MCF 10A (cell line): ENCODE measurements at regions of chr16 and their contacts with region 1.

Region 1: DNA sequence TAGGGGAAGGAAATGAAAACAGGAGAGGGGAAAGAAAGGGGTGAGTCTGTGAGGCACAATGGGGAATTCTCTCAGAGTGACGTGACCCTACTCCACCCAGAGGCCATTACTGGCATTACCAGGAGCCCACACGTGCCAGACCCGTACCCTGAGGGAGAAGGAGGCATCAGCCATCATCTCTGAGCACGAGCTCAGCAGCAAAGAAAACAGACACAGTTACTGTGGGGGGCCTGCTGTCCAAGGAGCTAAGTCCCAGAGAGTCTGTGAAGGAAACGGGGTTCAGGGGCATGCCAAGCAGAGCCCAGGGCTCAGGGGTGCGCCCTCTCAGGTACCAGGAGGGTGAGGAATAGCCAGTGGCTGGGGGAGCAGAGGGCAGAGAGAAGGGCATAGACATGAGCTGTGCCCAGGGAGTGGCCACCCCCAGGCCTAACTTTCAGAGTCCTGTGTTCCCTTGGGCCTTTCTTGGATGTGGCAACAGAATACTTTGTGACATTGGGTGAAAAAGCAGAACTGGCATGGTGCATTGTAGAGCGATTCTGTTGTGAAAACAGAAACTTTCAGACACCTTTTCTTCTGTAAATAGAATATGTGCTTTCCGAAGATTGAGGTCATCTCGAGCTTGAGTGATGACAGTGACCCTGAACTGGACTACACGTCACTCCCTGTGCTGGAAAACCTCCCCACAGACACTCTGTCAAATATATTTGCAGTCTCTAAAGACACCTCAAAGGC is 11.3 kb downstream of the TAF1C start:
- DNase-seq: peak; percentile 67
- H3K4me3 Mint-ChIP-seq: no peak overlapping the region
- H3K27ac Mint-ChIP-seq: peak overlapping the region; percentile 41
- H3K4me1 Mint-ChIP-seq: peaks cover 6% of the 10 kb centered on the region
- H3K27me3 Mint-ChIP-seq: no peaks in the 10 kb centered on the region
- CTCF ChIP-seq: peak; percentile 62

Region 2: DNA sequence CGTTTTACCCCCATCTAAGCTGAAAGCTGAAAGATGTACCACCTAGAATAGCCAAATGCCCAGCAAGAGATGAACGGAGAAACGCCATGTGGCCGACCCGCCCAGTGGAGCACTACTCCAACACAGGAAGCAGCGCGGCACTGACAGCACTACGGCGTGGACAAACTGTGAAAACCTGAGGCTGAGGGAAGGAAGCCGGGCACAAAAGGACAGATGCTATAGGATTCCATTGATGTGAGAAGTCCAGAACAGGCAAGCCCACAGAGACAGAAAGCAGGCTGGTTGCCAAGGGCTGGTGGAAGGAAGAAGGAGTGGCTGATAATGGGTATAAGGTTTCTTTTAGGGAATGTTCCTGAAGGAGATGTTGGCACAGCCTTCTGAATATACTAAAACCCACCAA is 103.5 kb before region 1 on chr16:
- CTCF ChIA-PET with region 1: interaction called, 10 read pairs
- POLR2A ChIA-PET with region 1: no interaction called
- intact Hi-C with region 1: no loop called
- DNase-seq: no peak
- H3K4me3 Mint-ChIP-seq: no peak overlapping the region
- H3K27ac Mint-ChIP-seq: no peak overlapping the region
- H3K4me1 Mint-ChIP-seq: no peaks in the 10 kb centered on the region
- H3K27me3 Mint-ChIP-seq: no peaks in the 10 kb centered on the region
- CTCF ChIP-seq: no peak

Region 3: GRCh38 chr16:84084570-84085270 is 90.8 kb before region 1 on chr16:
- CTCF ChIA-PET with region 1: interaction called, 18 read pairs
- POLR2A ChIA-PET with region 1: interaction called, 3 read pairs
- intact Hi-C with region 1: no loop called
- DNase-seq: peak; percentile 77
- H3K4me3 Mint-ChIP-seq: no peak overlapping the region
- H3K27ac Mint-ChIP-seq: no peak overlapping the region
- H3K4me1 Mint-ChIP-seq: no peaks in the 10 kb centered on the region
- H3K27me3 Mint-ChIP-seq: no peaks in the 10 kb centered on the region
- CTCF ChIP-seq: peak; percentile 75

Region 4: GRCh38 chr16:84096115-84097012 is 79.2 kb before region 1 on chr16:
- CTCF ChIA-PET with region 1: interaction called, 14 read pairs
- POLR2A ChIA-PET with region 1: no interaction called
- intact Hi-C with region 1: no loop called
- DNase-seq: no peak
- H3K4me3 Mint-ChIP-seq: no peak overlapping the region
- H3K27ac Mint-ChIP-seq: no peak overlapping the region
- H3K4me1 Mint-ChIP-seq: no peaks in the 10 kb centered on the region
- H3K27me3 Mint-ChIP-seq: no peaks in the 10 kb centered on the region
- CTCF ChIP-seq: no peak

Region 5: GRCh38 chr16:84186685-84187437 is 11.3 kb after region 1 on chr16 and contains the start of gene TAF1C:
- CTCF ChIA-PET with region 1: interaction called, 49 read pairs
- POLR2A ChIA-PET with region 1: interaction called, 22 read pairs
- intact Hi-C with region 1: no loop called
- DNase-seq: peak; percentile 92
- H3K4me3 Mint-ChIP-seq: peak within 1 kb of the TSS; percentile 87
- H3K27ac Mint-ChIP-seq: peak within 1 kb of the TSS; percentile 69
- H3K4me1 Mint-ChIP-seq: peaks cover 14% of the 10 kb centered on the region
- H3K27me3 Mint-ChIP-seq: no peaks in the 10 kb centered on the region
- CTCF ChIP-seq: peak; percentile 89
- total RNA-seq, gene TAF1C: 29.3 and 35.1 TPM in 2 replicates